ENCODE measurements at regions of chr20 and their contacts with region 1.

Region 1: DNA sequence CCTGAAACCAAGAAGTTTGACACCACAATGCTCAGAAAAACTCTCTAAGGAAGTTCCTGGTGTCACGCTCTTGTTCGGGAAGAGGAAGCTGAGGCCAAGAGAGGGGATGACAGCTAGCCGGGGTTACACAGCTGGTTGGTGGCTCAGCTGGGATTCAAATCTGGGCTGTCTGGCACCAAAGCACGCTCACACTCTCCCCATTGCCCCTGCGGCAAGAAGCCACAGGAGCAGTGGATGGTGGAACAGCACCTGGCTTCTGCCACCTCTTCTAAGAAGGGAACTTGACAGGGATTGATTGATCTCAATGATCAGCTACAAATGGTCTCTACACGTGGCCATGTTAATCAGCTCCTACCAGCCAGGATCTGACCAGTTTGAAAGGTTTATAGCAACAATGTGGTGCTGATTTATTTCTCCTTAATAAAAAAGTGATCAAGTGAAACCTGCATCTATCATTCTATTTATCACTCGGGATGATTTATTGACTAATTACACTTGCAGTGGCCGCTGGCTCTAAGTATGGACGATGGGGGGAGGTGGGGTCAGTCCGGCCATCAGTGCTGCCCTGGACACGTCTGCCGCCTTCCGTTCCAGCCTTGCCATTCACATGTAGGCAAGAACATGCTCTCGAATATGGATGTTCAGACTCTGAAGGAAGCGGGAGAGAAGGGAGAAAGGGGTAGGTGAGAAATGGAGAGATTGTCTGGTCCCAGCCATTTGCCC is 71.9 kb upstream of the TOP1 start:
- DNase-seq: peak in 1 of 35 experiments; percentile 32
- ATAC-seq: no peak
- H3K4me3 ChIP-seq: no peak overlapping the region
- H3K4me3 Mint-ChIP-seq: no peak overlapping the region
- H3K27ac ChIP-seq: no peak overlapping the region
- H3K27ac Mint-ChIP-seq: no peak overlapping the region
- H3K4me1 ChIP-seq: peaks cover 0 to 7% of the 10 kb centered on the region in 2 experiments
- H3K4me1 Mint-ChIP-seq: peaks cover 0 to 9% (median 6%) of the 10 kb centered on the region in 3 donors
- H3K27me3 ChIP-seq: peaks cover 0 to 8% of the 10 kb centered on the region in 2 experiments
- H3K27me3 Mint-ChIP-seq: peaks cover 0 to 9% of the 10 kb centered on the region in 2 donors

Region 2: GRCh38 chr20:40980106-40980827 is 23.6 kb after region 1 on chr20:
- CTCF ChIA-PET with region 1: no interaction called
- POLR2A ChIA-PET with region 1: interaction called in 1 of 2 experiments, 11 read pairs
- DNase-seq: no peak
- ATAC-seq: no peak
- H3K4me3 ChIP-seq: no peak overlapping the region
- H3K4me3 Mint-ChIP-seq: no peak overlapping the region
- H3K27ac ChIP-seq: no peak overlapping the region
- H3K27ac Mint-ChIP-seq: no peak overlapping the region
- H3K4me1 ChIP-seq: no peaks in the 10 kb centered on the region
- H3K4me1 Mint-ChIP-seq: no peaks in the 10 kb centered on the region
- H3K27me3 ChIP-seq: peaks cover 0 to 13% of the 10 kb centered on the region in 2 experiments
- H3K27me3 Mint-ChIP-seq: peaks cover 22 to 28% of the 10 kb centered on the region in 2 donors

Region 3: DNA sequence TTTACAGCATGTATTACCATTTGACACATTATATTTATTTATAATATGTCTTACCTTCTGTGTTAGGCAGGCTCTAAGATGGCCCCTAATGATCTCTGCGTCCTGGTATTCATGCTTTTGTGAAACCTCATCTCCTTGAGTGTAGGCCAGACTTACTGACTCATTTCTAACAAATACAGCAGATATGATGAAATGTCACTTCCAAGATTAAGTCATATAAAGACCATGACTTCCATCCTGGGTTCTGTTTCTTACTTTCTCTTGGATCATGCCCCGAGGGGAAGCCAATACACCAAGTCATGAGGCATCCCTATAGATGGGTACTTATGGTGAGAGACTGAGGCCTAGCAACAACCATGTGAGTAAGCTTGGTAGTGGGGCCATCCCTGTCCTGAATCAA is 330.6 kb after region 1 on chr20:
- CTCF ChIA-PET with region 1: no interaction called
- POLR2A ChIA-PET with region 1: interaction called in 1 of 2 experiments, 10 read pairs
- DNase-seq: no peak
- ATAC-seq: no peak
- H3K4me3 ChIP-seq: no peak overlapping the region
- H3K4me3 Mint-ChIP-seq: no peak overlapping the region
- H3K27ac ChIP-seq: no peak overlapping the region
- H3K27ac Mint-ChIP-seq: no peak overlapping the region
- H3K4me1 ChIP-seq: no peaks in the 10 kb centered on the region
- H3K4me1 Mint-ChIP-seq: no peaks in the 10 kb centered on the region
- H3K27me3 ChIP-seq: no peaks in the 10 kb centered on the region
- H3K27me3 Mint-ChIP-seq: no peaks in the 10 kb centered on the region